Dendritic cell treated with granulocyte-macrophage colony-stimulating factor and Interleukin-4, amounts not matched to agents 40 ng/mL and 50 ng/mL, for 4 days (primary cell): ENCODE measurements at regions of chr19 and their contacts with region 1.

Region 1: GRCh38 chr19:44723952-44724319 is 24.6 kb upstream of the BCL3 start:
- H3K4me3 Mint-ChIP-seq: peak overlapping the region; percentile 53
- H3K27ac Mint-ChIP-seq: peak overlapping the region; percentile 73
- H3K4me1 Mint-ChIP-seq: peaks cover 84% of the 10 kb centered on the region
- H3K27me3 Mint-ChIP-seq: peaks cover 1% of the 10 kb centered on the region

Region 2: DNA sequence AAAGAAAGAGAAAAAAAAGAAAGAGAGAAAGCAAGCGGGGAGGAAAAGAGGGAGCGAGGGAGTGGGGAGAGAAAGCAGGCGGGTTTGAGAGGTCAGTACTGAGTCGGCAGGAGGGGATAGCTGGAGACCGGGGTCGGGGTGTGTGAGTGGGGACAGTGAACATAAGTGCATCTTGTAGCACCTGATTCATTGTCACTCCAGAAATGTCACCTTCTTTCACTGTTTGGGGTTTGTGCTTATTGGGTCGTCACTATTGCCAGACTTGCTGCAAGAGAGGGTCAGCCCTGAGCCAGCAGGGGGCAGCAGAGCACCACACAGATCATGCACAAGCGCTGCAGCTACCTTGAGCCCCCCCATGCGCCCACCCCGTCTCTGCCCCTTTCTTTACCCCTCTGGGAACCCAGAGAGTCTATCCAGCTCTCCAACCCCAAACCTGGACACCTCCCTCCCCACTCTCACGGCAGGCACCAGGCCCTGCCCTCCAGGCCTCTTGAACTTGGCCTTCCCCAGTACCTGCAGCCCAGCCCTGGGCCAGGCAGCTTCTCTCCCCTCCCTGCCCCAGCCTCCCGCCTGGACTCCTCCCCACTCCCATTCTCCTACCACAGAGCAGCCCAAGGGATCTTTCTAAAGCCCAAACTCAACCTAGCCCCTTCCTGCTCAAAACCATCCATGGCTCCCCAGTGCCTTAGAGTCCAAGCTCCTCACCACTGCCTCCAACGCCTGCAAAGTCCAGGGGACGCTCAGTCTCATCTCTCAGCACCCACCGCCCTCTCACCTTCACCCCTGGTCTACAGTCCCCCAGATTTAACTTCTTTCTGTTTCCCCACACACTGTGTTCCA is 34.7 kb before region 1 on chr19:
- intact Hi-C with region 1: loop called (anchors 1 kb)
- H3K4me3 Mint-ChIP-seq: no peak overlapping the region
- H3K27ac Mint-ChIP-seq: peak overlapping the region; percentile 67
- H3K4me1 Mint-ChIP-seq: peaks cover 74% of the 10 kb centered on the region
- H3K27me3 Mint-ChIP-seq: peaks cover 6% of the 10 kb centered on the region

Region 3: DNA sequence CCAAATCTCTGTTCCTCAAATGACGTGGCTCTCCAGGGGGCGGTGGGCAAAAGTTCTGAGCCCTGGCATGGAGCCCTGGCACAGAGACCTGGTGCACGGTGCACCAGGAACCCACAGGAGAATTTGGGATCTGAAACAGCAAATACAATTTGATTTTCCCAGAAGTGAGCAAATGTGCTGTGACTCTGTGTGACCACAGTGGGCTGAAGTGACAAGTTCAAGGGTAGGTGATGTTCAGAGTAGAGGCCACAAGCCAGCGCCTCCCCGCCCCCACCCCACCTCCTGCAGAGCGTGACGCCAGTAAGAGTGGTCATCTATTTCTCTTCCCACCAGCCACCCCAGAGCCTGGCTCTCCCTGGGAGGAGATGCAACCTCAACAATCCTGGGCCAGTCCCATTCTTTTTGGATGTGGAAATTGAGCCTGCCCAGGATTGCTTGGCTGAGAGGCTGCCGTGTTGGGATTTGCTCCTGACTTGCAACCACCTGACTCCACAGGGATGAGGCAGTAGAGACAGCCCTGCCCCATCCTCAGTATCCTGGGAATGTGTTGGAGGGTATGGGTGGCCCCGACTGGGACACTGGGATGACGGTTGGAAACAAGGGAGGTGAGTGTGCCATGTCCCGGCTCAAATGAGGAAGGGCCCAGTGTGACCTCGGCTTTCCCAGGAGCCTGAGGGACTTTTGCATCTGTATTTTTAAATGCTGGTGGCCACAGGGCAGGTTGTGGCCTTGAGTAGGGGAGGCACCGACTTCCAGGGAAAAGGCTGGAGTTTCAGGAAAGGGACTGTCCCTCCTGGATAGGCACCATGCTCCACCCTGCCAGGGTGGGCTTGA is 13.5 kb after region 1 on chr19:
- intact Hi-C with region 1: no loop called
- H3K4me3 Mint-ChIP-seq: peak overlapping the region; percentile 46
- H3K27ac Mint-ChIP-seq: peak overlapping the region; percentile 87
- H3K4me1 Mint-ChIP-seq: peaks cover 84% of the 10 kb centered on the region
- H3K27me3 Mint-ChIP-seq: no peaks in the 10 kb centered on the region

Region 4: GRCh38 chr19:44747739-44748425 is 23.9 kb after region 1 on chr19:
- intact Hi-C with region 1: loop called (anchors 2 kb)
- H3K4me3 Mint-ChIP-seq: peak overlapping the region; percentile 79
- H3K27ac Mint-ChIP-seq: peak overlapping the region; percentile 93
- H3K4me1 Mint-ChIP-seq: peaks cover 68% of the 10 kb centered on the region
- H3K27me3 Mint-ChIP-seq: no peaks in the 10 kb centered on the region

Region 5: DNA sequence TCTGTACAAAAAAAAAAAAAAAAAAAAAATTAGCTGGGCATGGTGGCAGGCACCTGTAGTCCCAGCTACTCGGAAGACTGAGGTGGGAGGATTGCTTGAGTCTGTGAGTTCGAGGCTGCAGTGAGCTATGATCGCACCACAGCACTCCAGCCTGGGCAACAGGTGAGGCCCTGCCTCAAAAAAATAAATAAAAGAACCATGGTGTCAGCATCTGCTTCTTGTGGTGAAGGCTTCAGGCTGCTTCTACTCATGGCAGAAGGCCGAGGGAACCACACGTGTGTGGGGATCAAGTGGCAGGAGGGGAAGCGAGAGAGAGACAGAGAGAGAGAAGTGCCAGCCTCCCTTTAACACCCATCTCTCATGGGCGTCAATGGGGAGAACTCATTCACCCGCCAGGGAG is 38.1 kb after region 1 on chr19:
- intact Hi-C with region 1: no loop called
- H3K4me3 Mint-ChIP-seq: no peak overlapping the region
- H3K27ac Mint-ChIP-seq: peak overlapping the region; percentile 55
- H3K4me1 Mint-ChIP-seq: peaks cover 54% of the 10 kb centered on the region
- H3K27me3 Mint-ChIP-seq: no peaks in the 10 kb centered on the region